GM18951 (cell line): ENCODE measurements at regions of chr1 and their contacts with region 1.

Region 1: GRCh38 chr1:165903672-165904071 is 76.3 kb downstream of the UCK2 start:
- POLR2A ChIP-seq: no peak

Region 2: GRCh38 chr1:165392634-165393571 is 510.8 kb before region 1 on chr1:
- in situ Hi-C with region 1: loop called (anchors 10 kb)
- POLR2A ChIP-seq: no peak

Region 3: DNA sequence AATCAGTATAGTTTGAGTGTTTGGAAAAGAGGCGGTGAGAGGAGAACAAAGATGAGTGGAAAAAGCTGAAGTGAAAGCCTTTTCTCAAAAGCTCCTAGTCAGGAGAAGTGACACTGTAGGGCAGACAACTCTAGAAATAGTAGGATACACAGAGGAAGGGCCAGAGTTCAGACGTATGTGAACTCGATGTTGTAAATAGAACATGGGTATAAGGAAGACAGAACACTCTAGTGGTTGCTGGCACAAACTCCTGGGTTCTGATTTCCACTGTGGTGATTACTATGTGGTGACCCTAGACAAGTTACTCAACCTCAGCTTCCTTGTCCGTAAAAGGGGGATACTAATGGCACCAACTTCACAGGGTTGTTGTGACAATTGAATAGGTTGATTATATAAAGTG is 302.9 kb before region 1 on chr1:
- in situ Hi-C with region 1: loop called (anchors 10 kb)
- POLR2A ChIP-seq: no peak

Region 4: GRCh38 chr1:166221316-166221715 is 317.6 kb after region 1 on chr1:
- in situ Hi-C with region 1: no loop called
- POLR2A ChIP-seq: no peak